Panc1 (cell line): ENCODE measurements at regions of chr4 and their contacts with region 1.

Region 1: GRCh38 chr4:105536599-105536998 is 15.8 kb upstream of the ARHGEF38 start:
- DNase-seq: no peak
- ATAC-seq: no peak
- H3K4me3 ChIP-seq: no peak overlapping the region
- H3K27ac ChIP-seq: no peak overlapping the region
- H3K4me1 ChIP-seq: no peaks in the 10 kb centered on the region
- H3K27me3 ChIP-seq: no peaks in the 10 kb centered on the region
- CTCF ChIP-seq: no peak

Region 2: GRCh38 chr4:105560421-105560848 is 23.8 kb after region 1 on chr4:
- CTCF ChIA-PET with region 1: interaction called, 12 read pairs
- POLR2A ChIA-PET with region 1: no interaction called
- in situ Hi-C with region 1: no loop called
- intact Hi-C with region 1: no loop called
- DNase-seq: no peak
- ATAC-seq: no peak
- H3K4me3 ChIP-seq: no peak overlapping the region
- H3K27ac ChIP-seq: no peak overlapping the region
- H3K4me1 ChIP-seq: no peaks in the 10 kb centered on the region
- H3K27me3 ChIP-seq: no peaks in the 10 kb centered on the region
- CTCF ChIP-seq: no peak

Region 3: GRCh38 chr4:105657117-105657765 is 120.6 kb after region 1 on chr4:
- CTCF ChIA-PET with region 1: no interaction called
- POLR2A ChIA-PET with region 1: no interaction called
- in situ Hi-C with region 1: no loop called
- intact Hi-C with region 1: loop called (anchors 10 kb)
- DNase-seq: no peak
- ATAC-seq: no peak
- H3K4me3 ChIP-seq: no peak overlapping the region
- H3K27ac ChIP-seq: no peak overlapping the region
- H3K4me1 ChIP-seq: no peaks in the 10 kb centered on the region
- H3K27me3 ChIP-seq: no peaks in the 10 kb centered on the region; the same call in 1 of the 2 replicates
- CTCF ChIP-seq: no peak